ENCODE measurements at regions of chr12 and their contacts with region 1.

Region 1: GRCh38 chr12:65156366-65156841 is 13.0 kb upstream of the LEMD3 start:
- DNase-seq: peak; percentile 77
- ATAC-seq: peak; percentile 90
- H3K4me3 ChIP-seq: peak overlapping the region; percentile 44
- H3K27ac ChIP-seq: peak overlapping the region; percentile 69
- H3K4me1 ChIP-seq: peaks cover 20% of the 10 kb centered on the region
- H3K27me3 ChIP-seq: no peaks in the 10 kb centered on the region
- CTCF ChIP-seq: no peak
- EP300 ChIP-seq: 0 out of 4 replicates have a peak, but pooled peaks of 1 of the 2 experiments have one; percentile 62
- POLR2A ChIP-seq: no peak
- RAD21 ChIP-seq: no peak

Region 2: GRCh38 chr12:65209655-65210043 is 53.2 kb after region 1 on chr12:
- CTCF ChIA-PET with region 1: interaction called, 3 read pairs
- POLR2A ChIA-PET with region 1: no interaction called
- RAD21 ChIA-PET with region 1: interaction called, 10 read pairs
- SMC1A ChIA-PET with region 1: interaction called, 12 read pairs
- in situ Hi-C with region 1: no loop called
- intact Hi-C with region 1: no loop called
- DNase-seq: no peak
- ATAC-seq: peak; percentile 86
- H3K4me3 ChIP-seq: no peak overlapping the region
- H3K27ac ChIP-seq: peak overlapping the region; percentile 80
- H3K4me1 ChIP-seq: peaks cover 21% of the 10 kb centered on the region
- H3K27me3 ChIP-seq: no peaks in the 10 kb centered on the region
- CTCF ChIP-seq: no peak
- EP300 ChIP-seq: no peak
- POLR2A ChIP-seq: no peak
- RAD21 ChIP-seq: no peak

Measured in GM12878 (cell line).